ENCODE measurements at regions of chr12 and their contacts with region 1.

Region 1: DNA sequence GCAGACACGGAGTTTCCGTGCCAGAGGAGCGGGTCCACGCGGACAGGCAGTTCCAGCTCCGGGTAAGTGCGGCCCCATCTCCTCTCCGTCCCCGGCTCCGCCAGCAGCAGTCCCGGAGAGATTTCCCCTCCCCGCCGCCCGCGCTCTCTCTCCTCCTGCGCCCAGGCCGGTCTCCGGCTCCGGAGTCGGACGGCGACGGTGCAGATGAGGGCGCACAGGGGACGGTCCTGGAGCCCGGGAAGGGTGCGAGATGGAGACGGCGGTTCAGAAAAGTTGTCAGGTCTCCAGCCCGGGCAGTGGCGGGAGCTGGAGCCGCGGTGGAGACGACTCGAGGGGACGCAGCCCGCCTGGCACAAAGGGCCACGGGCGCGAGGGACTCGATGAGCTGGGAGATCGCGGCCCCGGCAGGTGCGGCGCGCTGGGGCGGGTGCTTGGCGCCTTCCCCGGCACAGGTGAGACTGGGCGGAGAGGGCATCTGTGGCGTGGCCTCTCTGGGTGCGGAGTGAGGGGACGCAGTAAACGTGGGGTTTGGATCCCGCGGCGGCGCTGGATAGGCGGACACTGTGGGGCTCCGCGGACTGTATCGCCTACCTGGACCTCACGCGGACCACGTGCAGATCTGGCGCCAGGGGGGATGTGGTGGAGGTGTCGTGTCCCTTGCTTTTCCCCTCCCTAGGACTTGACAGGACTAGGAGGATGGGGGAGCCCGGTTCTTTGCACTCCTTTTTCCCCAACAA is 1540.3 kb upstream of the TMEM132C start:
- DNase-seq: no peak
- H3K4me3 ChIP-seq: no peak overlapping the region
- H3K27me3 ChIP-seq: peaks cover 9% of the 10 kb centered on the region
- CTCF ChIP-seq: no peak

Region 2: GRCh38 chr12:125399489-125399888 is 1327.2 kb before region 1 on chr12:
- CTCF ChIA-PET with region 1: no interaction called
- POLR2A ChIA-PET with region 1: no interaction called
- DNase-seq: no peak
- H3K4me3 ChIP-seq: no peak overlapping the region
- H3K27me3 ChIP-seq: no peaks in the 10 kb centered on the region
- CTCF ChIP-seq: no peak

Region 3: GRCh38 chr12:126747530-126748149 is 21.0 kb after region 1 on chr12:
- CTCF ChIA-PET with region 1: interaction called, 10 read pairs
- POLR2A ChIA-PET with region 1: no interaction called
- DNase-seq: no peak
- H3K4me3 ChIP-seq: no peak overlapping the region
- H3K27me3 ChIP-seq: no peaks in the 10 kb centered on the region
- CTCF ChIP-seq: peak; percentile 92

Measured in BJ (cell line).